Esophagus muscularis mucosa (tissue), 4 donors: ENCODE measurements at regions of chr1 and their contacts with region 1.

Region 1: GRCh38 chr1:3319874-3320245 is 134.6 kb upstream of the ARHGEF16 start:
- DNase-seq: no peak
- H3K4me3 ChIP-seq: no peak overlapping the region
- H3K27ac ChIP-seq: no peak overlapping the region
- H3K4me1 ChIP-seq: peaks cover 20 to 44% (median 33%) of the 10 kb centered on the region in 4 donors
- H3K27me3 ChIP-seq: peaks cover 0 to 52% (median 5%) of the 10 kb centered on the region in 4 donors
- CTCF ChIP-seq: peak; percentile 61 to 80 (median 70)
- EP300 ChIP-seq: no peak
- POLR2A ChIP-seq: no peak

Region 2: DNA sequence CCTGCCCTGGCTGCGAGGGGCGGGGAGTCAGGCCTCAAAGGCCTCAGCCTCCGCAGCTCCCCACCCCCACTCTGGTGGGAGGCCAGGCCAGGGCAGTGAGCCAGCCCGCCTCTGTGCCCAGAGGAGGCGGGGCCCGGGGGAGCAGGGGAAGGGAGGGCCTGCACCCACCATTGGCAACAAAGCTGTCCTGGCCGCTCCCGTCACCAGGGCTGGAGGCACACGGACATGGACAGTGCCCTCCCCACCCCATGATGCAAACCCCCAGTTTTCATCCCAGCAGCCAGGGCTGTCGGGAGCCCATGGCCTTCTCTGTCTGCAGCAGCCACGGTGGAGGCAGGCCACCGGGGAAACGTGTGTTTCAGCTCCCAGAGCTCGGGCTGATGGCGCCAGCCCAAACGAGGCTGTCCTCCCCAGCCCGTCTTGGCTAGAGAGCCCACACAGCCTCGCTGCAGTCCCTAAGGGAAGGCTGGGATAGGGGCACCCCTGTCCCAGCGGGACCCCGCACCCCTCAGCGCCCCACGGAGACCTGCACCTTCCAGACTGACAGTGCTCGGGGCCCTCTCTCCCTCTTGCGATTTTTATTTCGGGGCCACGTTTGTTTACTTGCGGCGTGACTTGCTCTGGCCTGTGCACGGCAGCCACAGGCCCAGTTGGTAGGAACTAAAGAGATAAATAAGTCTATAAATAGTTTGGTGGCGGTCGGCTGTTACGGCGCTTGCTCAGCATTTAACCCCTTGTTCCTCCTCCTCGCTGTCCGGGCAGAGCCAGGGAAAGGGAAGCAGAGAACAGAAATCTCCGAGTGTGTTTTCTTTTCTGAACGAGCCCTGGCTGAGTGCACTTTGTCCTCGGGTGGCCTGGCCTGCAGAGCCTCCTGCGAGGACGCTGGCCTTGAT is 149.1 kb before region 1 on chr1:
- intact Hi-C with region 1: loop called (anchors 5 kb)
- DNase-seq: no peak
- H3K4me3 ChIP-seq: peak overlapping the region; percentile 45 to 57 (median 54)
- H3K27ac ChIP-seq: peak overlapping the region; percentile 77 to 83 (median 83)
- H3K4me1 ChIP-seq: peaks cover 56 to 67% (median 59%) of the 10 kb centered on the region in 4 donors
- H3K27me3 ChIP-seq: no peaks in the 10 kb centered on the region
- CTCF ChIP-seq: no peak
- EP300 ChIP-seq: no peak
- POLR2A ChIP-seq: no peak